GM12878 (cell line): ENCODE measurements at regions of chr13 and their contacts with region 1.

Region 1: GRCh38 chr13:76991796-76992547 is at the start of gene CLN5:
- DNase-seq: peak; percentile 72
- ATAC-seq: peak; percentile 96
- H3K4me3 ChIP-seq: peak within 1 kb of the TSS; percentile 90
- H3K27ac ChIP-seq: peak within 1 kb of the TSS; percentile 54
- H3K4me1 ChIP-seq: peaks cover 7% of the 10 kb centered on the region
- H3K27me3 ChIP-seq: no peaks in the 10 kb centered on the region
- CTCF ChIP-seq: no peak
- EP300 ChIP-seq: 0 out of 4 replicates have a peak, but pooled peaks of 1 of the 2 experiments have one; percentile 51
- POLR2A ChIP-seq: peak; percentile 94
- RAD21 ChIP-seq: no peak
- polyA plus RNA-seq, gene CLN5: 12.3 to 13.0 TPM

Region 2: GRCh38 chr13:76874479-76874878 is 117.5 kb before region 1 on chr13:
- CTCF ChIA-PET with region 1: no interaction called
- POLR2A ChIA-PET with region 1: no interaction called
- RAD21 ChIA-PET with region 1: no interaction called
- SMC1A ChIA-PET with region 1: no interaction called
- in situ Hi-C with region 1: no loop called
- intact Hi-C with region 1: no loop called
- DNase-seq: no peak
- ATAC-seq: peak; percentile 68; the same call in 2 of the 3 replicates
- H3K4me3 ChIP-seq: no peak overlapping the region
- H3K27ac ChIP-seq: no peak overlapping the region
- H3K4me1 ChIP-seq: no peaks in the 10 kb centered on the region
- H3K27me3 ChIP-seq: peaks cover 0 to 3% of the 10 kb centered on the region in 2 experiments; a peak in 2 of 4 replicates
- CTCF ChIP-seq: no peak
- EP300 ChIP-seq: no peak
- POLR2A ChIP-seq: no peak
- RAD21 ChIP-seq: no peak

Region 3: DNA sequence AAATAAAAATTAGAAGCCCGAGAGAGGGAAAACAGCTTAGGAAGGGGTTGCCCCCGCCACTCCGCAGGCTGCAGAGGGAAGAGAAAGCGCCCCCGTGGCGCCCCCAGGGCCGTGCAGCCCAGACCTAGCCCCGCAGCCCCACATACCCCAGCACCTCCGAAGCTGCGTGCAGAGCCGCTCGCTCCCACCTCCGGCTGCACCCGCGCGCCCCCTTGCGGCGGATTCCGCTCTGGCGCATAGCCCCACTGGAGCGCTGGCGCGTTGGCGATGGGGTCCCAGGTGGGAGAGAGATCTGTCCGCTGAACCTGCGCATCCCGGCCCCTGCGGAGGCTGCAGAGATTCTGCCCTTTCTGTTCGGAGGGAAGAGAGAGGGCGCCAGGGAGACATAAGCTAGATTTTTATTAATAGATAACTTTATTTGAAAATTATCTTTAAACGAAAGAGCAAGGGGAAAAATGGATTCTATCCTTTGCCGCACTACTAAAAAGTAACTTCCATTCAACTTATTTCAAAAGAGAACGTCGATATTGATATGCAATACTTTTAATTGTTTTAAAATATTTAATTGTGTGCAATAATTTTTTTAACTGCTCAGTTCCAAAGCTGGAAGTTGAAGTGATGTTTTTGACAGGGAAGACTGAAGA is 11.8 kb before region 1 on chr13:
- CTCF ChIA-PET with region 1: interaction called, 27 read pairs
- POLR2A ChIA-PET with region 1: interaction called, 6 read pairs
- RAD21 ChIA-PET with region 1: interaction called, 3 read pairs
- SMC1A ChIA-PET with region 1: interaction called, 6 read pairs
- in situ Hi-C with region 1: no loop called
- intact Hi-C with region 1: no loop called
- DNase-seq: no peak
- ATAC-seq: peak; percentile 100
- H3K4me3 ChIP-seq: no peak overlapping the region
- H3K27ac ChIP-seq: no peak overlapping the region
- H3K4me1 ChIP-seq: no peaks in the 10 kb centered on the region
- H3K27me3 ChIP-seq: peaks cover 0 to 2% of the 10 kb centered on the region in 2 experiments; a peak in 2 of 4 replicates
- CTCF ChIP-seq: peak; percentile 89 to 99 (median 94)
- EP300 ChIP-seq: no peak
- POLR2A ChIP-seq: no peak
- RAD21 ChIP-seq: peak; percentile 78

Region 4: GRCh38 chr13:77002590-77003190 is 10.7 kb after region 1 on chr13:
- CTCF ChIA-PET with region 1: interaction called, 47 read pairs
- POLR2A ChIA-PET with region 1: interaction called, 16 read pairs
- RAD21 ChIA-PET with region 1: interaction called, 9 read pairs
- SMC1A ChIA-PET with region 1: interaction called, 11 read pairs
- in situ Hi-C with region 1: no loop called
- intact Hi-C with region 1: no loop called
- DNase-seq: no peak
- ATAC-seq: peak; percentile 47
- H3K4me3 ChIP-seq: no peak overlapping the region
- H3K27ac ChIP-seq: no peak overlapping the region
- H3K4me1 ChIP-seq: 0 out of 2 replicates have a peak, but pooled peaks cover 3% of the 10 kb centered on the region
- H3K27me3 ChIP-seq: no peaks in the 10 kb centered on the region
- CTCF ChIP-seq: peak; percentile 44 to 56 (median 54); a peak in 4 of 6 replicates
- EP300 ChIP-seq: no peak
- POLR2A ChIP-seq: no peak
- RAD21 ChIP-seq: peak; percentile 34; the same call in 1 of the 2 replicates

Region 5: GRCh38 chr13:77026818-77027585 is 35.0 kb after region 1 on chr13 and contains the start of gene FBXL3:
- CTCF ChIA-PET with region 1: interaction called, 5 read pairs
- POLR2A ChIA-PET with region 1: interaction called, 27 read pairs
- RAD21 ChIA-PET with region 1: interaction called, 10 read pairs
- SMC1A ChIA-PET with region 1: interaction called, 12 read pairs
- in situ Hi-C with region 1: no loop called
- intact Hi-C with region 1: loop called (anchors 2 kb)
- DNase-seq: peak; percentile 35
- ATAC-seq: peak; percentile 63
- H3K4me3 ChIP-seq: peak within 1 kb of the TSS; percentile 93
- H3K27ac ChIP-seq: peak within 1 kb of the TSS; percentile 79
- H3K4me1 ChIP-seq: no peaks in the 10 kb centered on the region
- H3K27me3 ChIP-seq: no peaks in the 10 kb centered on the region
- CTCF ChIP-seq: no peak
- EP300 ChIP-seq: no peak
- POLR2A ChIP-seq: peak; percentile 90
- RAD21 ChIP-seq: no peak
- polyA plus RNA-seq, gene FBXL3: 9.0 to 11.4 TPM

Region 6: GRCh38 chr13:77506874-77507273 is 514.9 kb after region 1 on chr13:
- CTCF ChIA-PET with region 1: no interaction called
- POLR2A ChIA-PET with region 1: no interaction called
- RAD21 ChIA-PET with region 1: no interaction called
- SMC1A ChIA-PET with region 1: no interaction called
- in situ Hi-C with region 1: no loop called
- intact Hi-C with region 1: loop called (anchors 5 kb)
- DNase-seq: no peak
- ATAC-seq: no peak
- H3K4me3 ChIP-seq: no peak overlapping the region
- H3K27ac ChIP-seq: no peak overlapping the region
- H3K4me1 ChIP-seq: peaks cover 17% of the 10 kb centered on the region
- H3K27me3 ChIP-seq: no peaks in the 10 kb centered on the region
- CTCF ChIP-seq: peak; percentile 16 to 32 (median 22); a peak in 3 of 6 replicates
- EP300 ChIP-seq: no peak
- POLR2A ChIP-seq: no peak
- RAD21 ChIP-seq: peak; percentile 18; the same call in 1 of the 2 replicates

Region 7: DNA sequence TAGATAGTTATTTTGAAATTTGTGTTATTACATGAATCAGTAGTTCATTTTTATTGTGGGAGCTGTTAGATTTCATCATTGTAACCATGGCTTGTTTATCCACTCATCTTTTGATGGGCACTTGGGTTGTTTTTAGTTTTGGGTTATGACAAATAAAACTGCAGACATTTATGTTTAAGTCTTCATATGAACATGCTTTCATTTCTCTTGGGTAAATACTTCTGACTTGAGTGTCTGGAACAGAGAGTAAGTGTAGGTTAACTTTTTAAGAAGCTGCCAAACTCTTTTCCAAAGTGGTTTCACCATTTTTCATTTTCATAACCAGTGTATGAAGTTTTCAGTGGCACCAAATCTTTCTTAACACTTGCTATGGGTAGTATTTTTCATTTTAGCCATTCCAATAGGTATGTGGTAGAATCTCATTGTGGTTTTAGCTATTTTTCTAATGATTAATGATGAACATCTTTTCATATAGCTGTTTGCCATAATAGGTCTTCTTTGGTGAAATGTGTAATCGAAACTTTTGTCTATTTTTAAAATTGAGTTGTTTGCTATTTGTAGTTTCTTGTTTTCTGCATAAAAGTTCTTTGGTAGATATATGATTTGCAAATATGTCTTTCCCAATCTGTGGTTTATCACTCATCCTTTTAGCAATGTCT is 723.4 kb after region 1 on chr13:
- CTCF ChIA-PET with region 1: interaction called, 3 read pairs
- POLR2A ChIA-PET with region 1: no interaction called
- RAD21 ChIA-PET with region 1: no interaction called
- SMC1A ChIA-PET with region 1: no interaction called
- in situ Hi-C with region 1: loop called (anchors 10 kb)
- intact Hi-C with region 1: no loop called
- DNase-seq: no peak
- ATAC-seq: peak; percentile 65
- H3K4me3 ChIP-seq: no peak overlapping the region
- H3K27ac ChIP-seq: peak overlapping the region; percentile 17
- H3K4me1 ChIP-seq: peaks cover 12% of the 10 kb centered on the region
- H3K27me3 ChIP-seq: no peaks in the 10 kb centered on the region
- CTCF ChIP-seq: no peak
- EP300 ChIP-seq: no peak; a peak in 1 of 4 replicates
- POLR2A ChIP-seq: no peak
- RAD21 ChIP-seq: no peak